Aorta (tissue), 5 donors: ENCODE measurements at regions of chr11 and their contacts with region 1.

Region 1: GRCh38 chr11:85941380-85941973 is 86.3 kb downstream of the CCDC83 start:
- DNase-seq: peak in 1 of 2 donors; percentile 69
- ATAC-seq: peak; percentile 85
- H3K4me3 ChIP-seq: no peak overlapping the region
- H3K27ac ChIP-seq: no peak overlapping the region
- H3K4me1 ChIP-seq: no peaks in the 10 kb centered on the region
- H3K27me3 ChIP-seq: no peaks in the 10 kb centered on the region

Region 2: GRCh38 chr11:85854557-85855340 is 86.7 kb before region 1 on chr11:
- intact Hi-C with region 1: loop called in 1 of 2 experiments (anchors 10 kb)
- DNase-seq: peak; percentile 95 to 97
- ATAC-seq: peak; percentile 100
- H3K4me3 ChIP-seq: peak overlapping the region; percentile 31 to 51
- H3K27ac ChIP-seq: peak overlapping the region in 1 of 2 donors; percentile 69
- H3K4me1 ChIP-seq: no peaks in the 10 kb centered on the region
- H3K27me3 ChIP-seq: no peaks in the 10 kb centered on the region

Region 3: GRCh38 chr11:85893395-85893794 is 48.1 kb before region 1 on chr11:
- intact Hi-C with region 1: no loop called
- DNase-seq: no peak
- ATAC-seq: no peak
- H3K4me3 ChIP-seq: no peak overlapping the region
- H3K27ac ChIP-seq: no peak overlapping the region
- H3K4me1 ChIP-seq: no peaks in the 10 kb centered on the region
- H3K27me3 ChIP-seq: no peaks in the 10 kb centered on the region

Region 4: DNA sequence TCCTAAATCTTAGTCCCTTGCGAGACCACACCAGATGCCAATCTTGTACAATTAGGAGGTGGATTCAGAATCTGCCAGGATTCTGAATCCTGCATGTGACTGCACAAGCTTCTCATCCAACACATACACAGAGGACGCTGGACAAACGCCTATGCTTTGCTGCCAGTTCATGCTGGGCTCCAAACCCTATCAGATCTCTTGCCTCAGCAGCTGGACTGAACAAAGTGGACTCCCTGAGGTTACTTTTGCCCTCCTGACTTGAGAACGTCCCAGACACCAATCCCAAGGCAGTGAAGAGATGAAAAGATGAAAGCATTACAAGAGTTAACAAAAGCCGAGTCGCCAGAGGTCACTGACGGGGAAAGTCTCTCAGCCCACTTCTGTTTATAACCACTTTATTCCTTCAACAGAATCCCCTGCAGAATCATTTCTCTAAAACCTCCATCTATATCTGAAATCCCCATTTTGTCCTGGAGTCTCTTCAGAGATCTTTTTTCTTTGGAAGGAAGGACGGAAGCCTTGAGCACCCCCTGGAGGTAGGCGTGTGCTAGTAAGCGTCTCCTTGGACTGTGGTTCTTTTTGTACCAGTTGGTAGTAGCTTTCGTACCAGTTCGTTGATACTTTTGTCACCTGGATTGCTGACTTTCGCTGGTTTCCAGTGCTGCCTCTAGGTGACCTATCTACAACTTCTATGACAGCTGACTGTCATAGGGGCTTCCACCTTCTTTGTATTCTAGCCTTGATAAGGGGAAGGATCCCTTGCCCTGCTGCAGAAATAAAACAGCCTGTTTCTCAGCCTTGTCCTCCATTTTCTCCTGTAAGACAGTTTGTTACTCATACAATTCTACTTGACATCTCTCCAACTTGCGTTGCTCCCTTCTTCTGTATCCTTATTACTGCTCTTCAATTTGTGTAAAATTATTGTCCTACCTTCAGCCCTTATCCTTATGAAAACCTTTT is 276.9 kb after region 1 on chr11:
- intact Hi-C with region 1: loop called (anchors 5 kb)
- DNase-seq: peak; percentile 78 to 84
- ATAC-seq: peak; percentile 89
- H3K4me3 ChIP-seq: peak overlapping the region; percentile 11 to 66
- H3K27ac ChIP-seq: peak overlapping the region in 1 of 2 donors; percentile 25
- H3K4me1 ChIP-seq: peaks cover 0 to 2% of the 10 kb centered on the region in 2 donors
- H3K27me3 ChIP-seq: peaks cover 0 to 1% of the 10 kb centered on the region in 2 donors

Region 5: DNA sequence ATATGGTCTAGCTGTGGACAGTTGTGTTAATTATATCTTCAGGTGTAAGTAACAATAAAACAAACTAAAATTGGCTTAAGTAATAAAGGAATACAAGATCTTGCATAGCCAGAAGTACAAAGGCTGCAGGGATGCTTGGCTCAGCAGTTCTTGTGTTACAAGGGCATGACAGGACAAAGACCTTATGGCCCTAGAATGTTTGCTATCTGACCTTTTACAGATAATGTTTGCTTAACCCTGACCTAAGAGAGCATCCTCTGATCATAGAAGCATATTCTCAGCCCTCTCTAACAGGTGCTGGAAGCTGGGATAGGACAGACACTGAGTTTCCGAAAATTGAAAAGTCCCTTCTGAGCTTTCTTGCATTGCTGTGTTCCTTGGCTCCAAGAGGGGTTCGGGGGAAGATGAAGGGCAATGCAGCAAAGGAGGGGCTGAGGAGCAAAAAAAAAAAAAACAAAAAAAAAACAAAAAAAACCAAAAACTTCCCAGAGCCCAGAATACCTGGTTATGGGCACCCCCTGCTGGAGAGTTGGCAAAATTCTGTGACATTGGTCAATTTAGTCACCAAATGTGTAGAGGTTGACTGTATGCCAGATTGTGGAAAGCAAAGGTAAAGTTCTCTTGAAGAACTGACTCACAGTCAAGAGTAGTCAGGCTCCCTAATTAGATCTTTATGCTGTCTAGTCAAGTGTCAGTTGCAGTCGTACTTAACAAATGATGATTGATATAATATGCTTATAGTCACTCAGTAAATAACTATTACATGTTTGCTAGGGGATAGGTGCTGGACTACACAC is 350.2 kb after region 1 on chr11:
- intact Hi-C with region 1: loop called (anchors 5 kb)
- DNase-seq: peak in 1 of 2 donors; percentile 56
- ATAC-seq: peak; percentile 50
- H3K4me3 ChIP-seq: no peak overlapping the region
- H3K27ac ChIP-seq: no peak overlapping the region
- H3K4me1 ChIP-seq: no peaks in the 10 kb centered on the region
- H3K27me3 ChIP-seq: no peaks in the 10 kb centered on the region